ENCODE measurements at regions of chr20 and their contacts with region 1.

Region 1: DNA sequence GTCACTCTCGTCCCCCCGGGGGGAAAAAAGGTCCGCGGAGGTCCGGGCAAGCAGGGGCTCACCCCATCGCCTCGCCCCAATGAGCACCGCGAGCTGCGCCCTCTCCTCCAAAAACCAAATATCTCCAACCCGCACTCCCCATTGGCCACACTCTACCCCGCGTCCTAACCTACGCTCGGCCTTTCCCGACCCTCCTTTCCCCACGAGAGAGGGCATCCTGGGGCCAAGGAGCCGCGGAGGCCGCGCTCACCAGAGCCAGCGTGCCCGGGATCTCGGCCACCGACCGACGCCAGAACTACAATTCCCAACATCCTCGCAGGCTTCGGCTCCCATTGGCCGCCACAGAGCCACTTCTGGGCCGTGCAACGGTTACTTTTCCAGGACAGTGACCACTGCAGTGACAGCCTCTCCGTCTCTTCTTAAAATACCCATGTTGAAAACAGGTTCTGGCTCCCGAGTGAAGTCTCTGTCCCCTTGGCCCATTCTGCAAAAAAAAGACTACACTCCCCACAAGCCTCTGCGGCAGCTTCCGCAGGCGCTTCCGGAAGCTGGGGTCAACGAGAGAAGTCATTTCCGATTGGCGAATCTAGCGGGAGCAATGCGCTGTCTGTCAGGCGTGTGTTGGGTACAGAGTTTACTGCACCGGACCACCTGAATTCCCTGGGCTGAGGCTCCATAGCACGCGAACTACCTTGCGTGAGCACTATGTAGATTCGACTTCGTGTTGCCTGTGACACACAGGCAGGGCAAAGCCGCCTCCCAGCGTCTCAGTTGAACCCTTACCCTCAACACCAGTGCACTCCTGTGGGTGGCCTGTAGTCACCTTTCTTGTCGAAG is at the start of gene ZNF343:
- DNase-seq: peak; percentile 74
- H3K4me3 Mint-ChIP-seq: peak within 1 kb of the TSS; percentile 98
- H3K27ac Mint-ChIP-seq: peak within 1 kb of the TSS; percentile 99
- H3K4me1 Mint-ChIP-seq: peaks cover 18% of the 10 kb centered on the region
- H3K27me3 Mint-ChIP-seq: peaks cover 19% of the 10 kb centered on the region
- total RNA-seq, gene ZNF343: 18.2 and 21.6 TPM in 2 replicates

Region 2: DNA sequence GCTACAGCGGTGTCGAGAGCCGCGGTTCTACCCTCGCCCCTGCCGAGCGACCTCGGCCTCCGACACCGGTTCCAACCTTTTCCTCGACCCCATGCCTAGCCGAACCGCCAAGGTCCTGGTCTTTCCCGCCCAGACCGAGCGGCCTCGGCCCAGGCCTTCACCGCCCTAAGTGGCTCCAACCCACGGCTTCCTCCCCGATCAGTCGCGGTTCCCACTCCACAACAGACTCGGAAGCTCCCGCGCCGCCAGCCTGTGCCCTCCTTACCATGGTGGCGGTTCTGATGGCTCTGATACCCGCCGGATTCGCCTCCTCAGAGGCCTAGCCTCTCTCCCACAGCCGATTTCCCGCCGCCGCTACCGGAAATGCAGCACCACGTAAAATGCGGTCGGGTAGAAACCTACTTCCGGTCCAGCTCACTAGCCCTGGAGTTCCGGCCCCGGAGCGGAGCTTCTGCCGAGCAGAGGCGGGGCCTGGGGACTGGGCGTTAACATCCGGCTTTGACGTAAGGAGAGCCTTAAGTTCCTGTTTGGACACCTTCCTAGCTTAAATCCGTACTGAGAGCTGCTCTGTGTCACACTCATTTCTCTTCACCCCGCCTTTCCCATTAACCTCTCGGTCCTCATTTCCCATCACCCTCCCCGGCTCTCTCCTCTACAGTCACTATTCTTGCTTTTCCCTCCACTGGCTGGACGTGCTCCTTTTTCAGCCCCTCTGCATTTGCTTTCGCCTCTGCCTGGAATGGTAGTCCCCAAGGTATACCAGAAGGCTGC is 38.2 kb before region 1 on chr20 and contains the start of gene SNRPB:
- intact Hi-C with region 1: loop called (anchors 1 kb)
- DNase-seq: peak; percentile 96
- H3K4me3 Mint-ChIP-seq: peak within 1 kb of the TSS; percentile 99
- H3K27ac Mint-ChIP-seq: peak within 1 kb of the TSS; percentile 97
- H3K4me1 Mint-ChIP-seq: peaks cover 58% of the 10 kb centered on the region
- H3K27me3 Mint-ChIP-seq: no peaks in the 10 kb centered on the region
- total RNA-seq, gene SNRPB: 533 and 548 TPM in 2 replicates